ENCODE measurements at regions of chr10 and their contacts with region 1.

Region 1: GRCh38 chr10:110871298-110872084 is at the start of gene PDCD4:
- DNase-seq: peak; percentile 87
- ATAC-seq: peak; percentile 71
- H3K4me3 Mint-ChIP-seq: peak within 1 kb of the TSS; percentile 94
- H3K27ac Mint-ChIP-seq: peak within 1 kb of the TSS; percentile 97
- H3K4me1 Mint-ChIP-seq: peaks cover 76% of the 10 kb centered on the region
- H3K27me3 Mint-ChIP-seq: no peaks in the 10 kb centered on the region
- CTCF ChIP-seq: no peak
- total RNA-seq, gene PDCD4: 143 and 145 TPM in 2 replicates

Region 2: GRCh38 chr10:110706690-110707098 is 164.8 kb before region 1 on chr10:
- CTCF ChIA-PET with region 1: no interaction called
- POLR2A ChIA-PET with region 1: no interaction called
- intact Hi-C with region 1: no loop called
- DNase-seq: no peak
- ATAC-seq: no peak
- H3K4me3 Mint-ChIP-seq: no peak overlapping the region
- H3K27ac Mint-ChIP-seq: no peak overlapping the region
- H3K4me1 Mint-ChIP-seq: no peaks in the 10 kb centered on the region
- H3K27me3 Mint-ChIP-seq: peaks cover 17% of the 10 kb centered on the region
- CTCF ChIP-seq: no peak

Region 3: GRCh38 chr10:110857265-110858158 is 14.0 kb before region 1 on chr10:
- CTCF ChIA-PET with region 1: interaction called, 3 read pairs
- POLR2A ChIA-PET with region 1: interaction called, 22 read pairs
- intact Hi-C with region 1: no loop called
- DNase-seq: no peak
- ATAC-seq: peak; percentile 19
- H3K4me3 Mint-ChIP-seq: no peak overlapping the region
- H3K27ac Mint-ChIP-seq: peak overlapping the region; percentile 30
- H3K4me1 Mint-ChIP-seq: peaks cover 63% of the 10 kb centered on the region
- H3K27me3 Mint-ChIP-seq: no peaks in the 10 kb centered on the region
- CTCF ChIP-seq: no peak

Region 4: DNA sequence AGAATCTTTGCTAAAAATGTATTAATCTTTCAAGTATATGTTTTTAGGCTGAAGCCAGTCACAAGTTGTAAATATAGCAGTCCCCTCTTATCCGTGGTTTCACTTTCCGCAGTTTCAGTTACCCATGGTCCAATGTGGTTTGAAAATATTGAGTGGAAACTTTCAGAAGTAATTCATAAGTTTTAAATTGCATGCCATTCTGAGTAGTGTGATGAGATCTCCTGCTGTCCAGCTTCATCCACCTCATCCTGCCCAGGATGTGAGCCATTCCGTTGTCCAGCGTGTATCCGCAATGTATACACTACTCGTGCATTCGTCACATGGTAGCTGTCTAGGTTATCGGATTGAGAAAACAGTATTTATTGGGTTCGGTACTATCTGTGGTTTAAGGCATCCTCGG is 12.4 kb after region 1 on chr10:
- CTCF ChIA-PET with region 1: interaction called, 4 read pairs
- POLR2A ChIA-PET with region 1: interaction called, 8 read pairs
- intact Hi-C with region 1: loop called (anchors 1 kb)
- DNase-seq: no peak
- ATAC-seq: no peak
- H3K4me3 Mint-ChIP-seq: no peak overlapping the region
- H3K27ac Mint-ChIP-seq: peak overlapping the region; percentile 79
- H3K4me1 Mint-ChIP-seq: peaks cover 39% of the 10 kb centered on the region
- H3K27me3 Mint-ChIP-seq: no peaks in the 10 kb centered on the region
- CTCF ChIP-seq: no peak

Region 5: DNA sequence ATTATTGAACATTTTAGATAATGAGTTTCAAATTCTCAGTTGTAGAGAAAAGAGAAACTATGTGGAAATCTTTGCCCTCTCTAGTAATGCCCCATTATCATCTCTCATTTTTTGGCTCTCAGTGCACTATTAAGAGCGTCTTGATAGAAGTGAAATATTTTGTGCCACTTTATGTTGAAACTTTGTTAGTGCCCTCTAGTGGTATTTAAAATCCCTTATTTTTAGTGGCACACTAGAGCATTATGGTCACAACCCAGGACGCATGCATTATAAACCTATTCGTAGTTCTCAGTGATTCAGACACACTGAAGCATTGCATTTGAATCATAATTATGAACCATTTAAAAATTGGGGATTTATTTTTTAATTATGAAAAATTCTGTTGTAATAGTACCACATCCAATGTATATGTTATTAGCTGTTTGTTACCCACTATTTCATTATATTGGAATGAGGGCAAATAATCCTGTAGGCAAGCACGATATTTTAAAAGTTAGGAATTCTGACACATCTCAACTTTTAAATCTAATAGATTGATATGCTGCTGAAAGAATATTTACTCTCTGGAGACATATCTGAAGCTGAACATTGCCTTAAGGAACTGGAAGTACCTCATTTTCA is 22.2 kb after region 1 on chr10:
- CTCF ChIA-PET with region 1: interaction called, 5 read pairs
- POLR2A ChIA-PET with region 1: interaction called, 6 read pairs
- intact Hi-C with region 1: loop called (anchors 1 kb)
- DNase-seq: no peak
- ATAC-seq: peak; percentile 93
- H3K4me3 Mint-ChIP-seq: no peak overlapping the region
- H3K27ac Mint-ChIP-seq: no peak overlapping the region
- H3K4me1 Mint-ChIP-seq: peaks cover 22% of the 10 kb centered on the region
- H3K27me3 Mint-ChIP-seq: no peaks in the 10 kb centered on the region
- CTCF ChIP-seq: no peak

Region 6: GRCh38 chr10:111109501-111110242 is 238.2 kb after region 1 on chr10:
- CTCF ChIA-PET with region 1: no interaction called
- POLR2A ChIA-PET with region 1: no interaction called
- intact Hi-C with region 1: no loop called
- DNase-seq: no peak
- ATAC-seq: no peak
- H3K4me3 Mint-ChIP-seq: no peak overlapping the region
- H3K27ac Mint-ChIP-seq: no peak overlapping the region
- H3K4me1 Mint-ChIP-seq: no peaks in the 10 kb centered on the region
- H3K27me3 Mint-ChIP-seq: peaks cover 18% of the 10 kb centered on the region
- CTCF ChIP-seq: no peak

Measured in activated B cell treated with CpG ODN at 0.5 μM for 24 hours (primary cell).